Caco-2 (cell line): ENCODE measurements at regions of chr17 and their contacts with region 1.

Region 1: GRCh38 chr17:42609182-42609813 is at the starts of genes RETREG3 and TUBG1:
- DNase-seq: peak; percentile 99
- H3K4me3 ChIP-seq: peak within 1 kb of the TSS; percentile 72
- H3K4me3 Mint-ChIP-seq: peak within 1 kb of the TSS; percentile 90
- H3K27ac Mint-ChIP-seq: peak within 1 kb of the TSS; percentile 77
- H3K4me1 ChIP-seq: peaks cover 6% of the 10 kb centered on the region; the same call in 1 of the 2 replicates
- H3K4me1 Mint-ChIP-seq: peaks cover 13% of the 10 kb centered on the region
- H3K27me3 ChIP-seq: no peaks in the 10 kb centered on the region
- H3K27me3 Mint-ChIP-seq: no peaks in the 10 kb centered on the region
- CTCF ChIP-seq: peak; percentile 21 to 51
- total RNA-seq, gene RETREG3: 58.6 and 59.0 TPM in 2 replicates
- total RNA-seq, gene TUBG1: 108 and 112 TPM in 2 replicates

Region 2: GRCh38 chr17:43952717-43953666 is 1343.7 kb after region 1 on chr17:
- CTCF ChIA-PET with region 1: no interaction called
- POLR2A ChIA-PET with region 1: interaction called, 11 read pairs
- intact Hi-C with region 1: no loop called
- DNase-seq: no peak
- H3K4me3 ChIP-seq: no peak overlapping the region
- H3K4me3 Mint-ChIP-seq: peak overlapping the region; percentile 53
- H3K27ac Mint-ChIP-seq: no peak overlapping the region
- H3K4me1 ChIP-seq: peaks cover 12% of the 10 kb centered on the region
- H3K4me1 Mint-ChIP-seq: no peaks in the 10 kb centered on the region
- H3K27me3 ChIP-seq: no peaks in the 10 kb centered on the region; the same call in 1 of the 2 replicates
- H3K27me3 Mint-ChIP-seq: peaks cover 11% of the 10 kb centered on the region
- CTCF ChIP-seq: no peak